ENCODE measurements at regions of chr6 and their contacts with region 1.

Region 1: DNA sequence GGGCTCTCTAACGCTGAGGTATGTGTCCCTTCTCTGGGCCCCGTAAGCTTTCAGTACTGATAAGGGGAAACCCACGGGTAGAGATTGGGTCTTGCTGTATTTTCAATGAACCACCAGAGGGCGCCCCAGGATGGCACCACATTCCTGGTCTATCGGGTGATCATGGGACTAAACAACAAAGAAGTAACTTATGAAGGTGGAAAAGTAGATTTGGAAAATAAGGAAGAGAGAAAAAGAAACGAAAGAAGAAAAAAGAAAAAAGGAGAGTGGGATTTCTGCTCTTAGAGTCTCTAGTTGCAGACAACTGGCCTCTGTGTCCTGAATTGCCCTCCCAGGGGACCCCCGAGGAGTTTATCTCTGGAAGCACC is 93.8 kb downstream of the GMPR start:
- DNase-seq: peak; percentile 88
- ATAC-seq: peak; percentile 98
- H3K4me3 Mint-ChIP-seq: no peak overlapping the region
- H3K27ac Mint-ChIP-seq: no peak overlapping the region
- H3K4me1 Mint-ChIP-seq: peaks cover 5% of the 10 kb centered on the region
- H3K27me3 Mint-ChIP-seq: no peaks in the 10 kb centered on the region
- CTCF ChIP-seq: peak; percentile 84

Region 2: DNA sequence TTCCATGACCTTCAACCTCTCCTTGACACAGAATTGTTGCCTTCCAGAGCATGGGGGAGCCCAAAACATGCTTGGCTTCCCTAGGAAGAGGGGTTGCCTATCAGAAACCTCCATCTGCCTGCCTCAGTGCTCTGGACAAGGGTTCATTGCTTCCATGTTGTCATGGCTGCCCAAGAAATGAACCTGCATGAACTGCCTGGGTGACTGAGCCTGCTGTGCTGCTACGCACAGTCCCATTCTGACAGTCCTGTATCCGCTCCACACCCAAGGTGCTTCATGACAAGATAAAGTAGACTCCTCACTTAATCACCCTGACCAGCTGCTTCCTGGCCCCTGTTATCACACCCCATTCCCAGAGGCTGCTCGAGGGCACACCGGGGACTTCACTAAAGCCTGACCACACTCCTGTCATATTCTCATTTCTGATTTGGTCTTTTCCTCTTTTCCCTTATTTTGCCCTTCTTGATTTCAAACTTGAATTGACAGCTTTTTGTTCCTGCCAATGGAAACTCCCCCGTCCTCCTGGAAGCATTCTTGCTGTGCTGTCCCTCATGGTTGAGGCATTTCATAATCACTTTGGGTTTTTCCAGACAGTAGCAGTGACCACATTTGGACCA is 61.9 kb before region 1 on chr6:
- CTCF ChIA-PET with region 1: no interaction called
- POLR2A ChIA-PET with region 1: no interaction called
- DNase-seq: no peak
- ATAC-seq: no peak
- H3K4me3 Mint-ChIP-seq: no peak overlapping the region
- H3K27ac Mint-ChIP-seq: no peak overlapping the region
- H3K4me1 Mint-ChIP-seq: no peaks in the 10 kb centered on the region
- H3K27me3 Mint-ChIP-seq: no peaks in the 10 kb centered on the region
- CTCF ChIP-seq: no peak

Region 3: DNA sequence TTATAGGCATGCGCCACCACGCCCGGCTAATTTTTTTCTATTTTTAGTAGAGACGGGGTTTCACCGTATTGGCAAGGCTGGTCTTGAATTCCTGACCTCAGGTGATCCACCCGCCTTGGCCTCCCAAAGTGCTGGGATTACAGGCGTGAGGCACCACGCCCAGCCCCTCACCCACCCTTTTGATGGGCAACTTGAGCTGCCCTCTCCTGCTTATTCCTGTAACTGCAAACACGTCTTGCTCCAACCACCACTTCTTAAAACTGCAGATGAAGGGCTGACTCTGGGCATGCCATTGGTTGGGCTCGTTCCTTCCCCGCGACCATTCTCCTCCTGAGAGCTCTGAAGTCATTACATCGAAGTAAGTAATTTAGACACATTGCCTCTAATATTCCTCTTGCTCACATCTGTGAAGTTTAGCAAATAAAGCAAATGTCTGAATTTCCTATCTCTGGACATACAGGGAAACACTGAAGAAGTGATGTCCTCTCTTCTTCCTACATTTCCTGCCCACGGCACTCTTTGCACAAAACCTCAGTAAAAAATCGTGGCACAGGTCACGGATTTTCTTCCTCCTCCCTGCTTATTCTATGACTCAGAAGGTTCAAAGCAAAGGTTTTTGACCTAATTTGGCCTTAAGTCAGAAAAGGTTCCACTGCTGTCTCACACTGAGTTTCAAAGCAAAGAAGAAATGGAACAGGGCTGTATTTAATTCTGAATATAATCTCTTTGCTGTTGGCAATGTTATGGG is 23.7 kb after region 1 on chr6:
- CTCF ChIA-PET with region 1: interaction called, 11 read pairs
- POLR2A ChIA-PET with region 1: no interaction called
- DNase-seq: no peak
- ATAC-seq: peak; percentile 89
- H3K4me3 Mint-ChIP-seq: no peak overlapping the region
- H3K27ac Mint-ChIP-seq: no peak overlapping the region
- H3K4me1 Mint-ChIP-seq: peaks cover 5% of the 10 kb centered on the region
- H3K27me3 Mint-ChIP-seq: no peaks in the 10 kb centered on the region
- CTCF ChIP-seq: no peak

Measured in WTC11 (cell line).